Activated CD8-positive, alpha-beta T cell treated with anti-CD3 and anti-CD28 coated beads for 36 hours (primary cell): ENCODE measurements at regions of chr21 and their contacts with region 1.

Region 1: GRCh38 chr21:42233067-42233961 is 14.4 kb downstream of the ABCG1 start:
- DNase-seq: peak; percentile 95
- ATAC-seq: peak; percentile 70
- H3K4me3 Mint-ChIP-seq: peak overlapping the region; percentile 73
- H3K27ac Mint-ChIP-seq: peak overlapping the region; percentile 97
- H3K4me1 Mint-ChIP-seq: peaks cover 96% of the 10 kb centered on the region
- H3K27me3 Mint-ChIP-seq: no peaks in the 10 kb centered on the region
- CTCF ChIP-seq: peak; percentile 68

Region 2: GRCh38 chr21:41868062-41868710 is 365.1 kb before region 1 on chr21:
- CTCF ChIA-PET with region 1: no interaction called
- POLR2A ChIA-PET with region 1: no interaction called
- intact Hi-C with region 1: no loop called
- DNase-seq: no peak
- ATAC-seq: no peak
- H3K4me3 Mint-ChIP-seq: no peak overlapping the region
- H3K27ac Mint-ChIP-seq: no peak overlapping the region
- H3K4me1 Mint-ChIP-seq: peaks cover 31% of the 10 kb centered on the region
- H3K27me3 Mint-ChIP-seq: no peaks in the 10 kb centered on the region
- CTCF ChIP-seq: no peak

Region 3: DNA sequence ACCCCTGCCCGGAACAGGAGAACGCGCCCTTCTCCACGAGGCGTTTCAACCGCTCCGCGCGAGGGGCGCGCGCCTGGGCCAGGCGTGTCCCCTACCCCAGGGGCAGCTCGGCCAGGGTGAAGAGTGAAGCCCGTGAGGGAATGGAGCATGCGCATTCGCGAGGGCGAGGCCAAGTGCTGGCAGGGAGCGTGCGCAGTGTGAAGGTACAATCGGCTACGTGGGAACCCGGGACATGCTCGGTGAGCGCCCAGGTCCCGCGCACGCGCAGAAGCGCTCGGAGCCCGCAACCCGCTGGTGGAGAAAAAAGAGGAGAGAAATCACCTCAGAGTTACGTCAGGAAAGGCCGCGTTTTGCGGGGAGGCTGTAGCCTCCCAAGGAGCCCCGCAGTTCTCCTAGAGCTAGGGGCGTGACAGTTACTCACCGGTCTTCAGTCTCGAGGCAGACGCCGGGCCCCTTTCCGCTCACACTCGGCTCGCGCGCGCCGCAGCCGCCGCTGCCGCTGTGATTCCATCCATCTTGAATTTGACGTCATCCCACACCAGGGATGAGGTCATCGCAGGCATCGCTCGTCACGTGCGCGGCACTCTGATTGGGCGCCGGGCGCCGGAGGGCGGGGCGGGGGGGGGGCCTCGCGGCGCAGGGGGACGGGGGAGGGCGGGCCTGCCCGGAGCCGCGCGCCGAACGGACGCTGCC is 223.3 kb before region 1 on chr21 and contains the start of gene ZBTB21:
- CTCF ChIA-PET with region 1: no interaction called
- POLR2A ChIA-PET with region 1: interaction called, 5 read pairs
- intact Hi-C with region 1: loop called (anchors 10 kb)
- DNase-seq: peak; percentile 98
- ATAC-seq: peak; percentile 90
- H3K4me3 Mint-ChIP-seq: peak within 1 kb of the TSS; percentile 93
- H3K27ac Mint-ChIP-seq: peak within 1 kb of the TSS; percentile 99
- H3K4me1 Mint-ChIP-seq: peaks cover 28% of the 10 kb centered on the region
- H3K27me3 Mint-ChIP-seq: no peaks in the 10 kb centered on the region
- CTCF ChIP-seq: no peak
- total RNA-seq, gene ZBTB21: 29.6 to 29.7 TPM

Region 4: DNA sequence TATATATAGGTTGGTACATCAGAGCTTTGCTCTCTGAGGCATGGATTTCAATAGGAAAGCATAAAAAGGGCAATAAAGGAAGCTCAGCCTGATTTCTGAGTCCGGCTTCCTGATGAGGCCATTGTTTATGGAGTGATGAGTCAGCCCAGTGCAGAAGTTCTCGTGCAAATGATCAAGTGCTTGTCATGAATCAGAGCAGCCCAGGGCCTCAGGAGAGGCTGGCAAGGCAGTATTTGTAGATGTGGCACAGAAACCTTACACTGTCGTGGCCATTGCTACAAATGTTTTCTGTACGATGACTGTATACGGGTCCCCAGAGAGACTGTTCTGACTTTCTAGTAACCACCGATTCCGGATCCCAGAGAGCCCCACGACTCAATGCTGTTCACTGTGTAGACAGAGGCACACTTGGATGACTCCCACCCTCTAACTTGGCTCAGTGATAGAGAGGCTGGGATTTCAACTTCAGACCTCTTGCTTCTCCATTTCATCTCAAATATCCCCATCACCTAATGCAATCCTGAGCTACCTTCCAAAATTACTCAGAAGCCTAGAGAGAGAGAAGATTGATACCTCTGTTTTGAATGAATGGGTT is 135.4 kb before region 1 on chr21:
- CTCF ChIA-PET with region 1: no interaction called
- POLR2A ChIA-PET with region 1: no interaction called
- intact Hi-C with region 1: no loop called
- DNase-seq: no peak
- ATAC-seq: peak; percentile 34
- H3K4me3 Mint-ChIP-seq: no peak overlapping the region
- H3K27ac Mint-ChIP-seq: no peak overlapping the region
- H3K4me1 Mint-ChIP-seq: no peaks in the 10 kb centered on the region
- H3K27me3 Mint-ChIP-seq: no peaks in the 10 kb centered on the region
- CTCF ChIP-seq: no peak

Region 5: DNA sequence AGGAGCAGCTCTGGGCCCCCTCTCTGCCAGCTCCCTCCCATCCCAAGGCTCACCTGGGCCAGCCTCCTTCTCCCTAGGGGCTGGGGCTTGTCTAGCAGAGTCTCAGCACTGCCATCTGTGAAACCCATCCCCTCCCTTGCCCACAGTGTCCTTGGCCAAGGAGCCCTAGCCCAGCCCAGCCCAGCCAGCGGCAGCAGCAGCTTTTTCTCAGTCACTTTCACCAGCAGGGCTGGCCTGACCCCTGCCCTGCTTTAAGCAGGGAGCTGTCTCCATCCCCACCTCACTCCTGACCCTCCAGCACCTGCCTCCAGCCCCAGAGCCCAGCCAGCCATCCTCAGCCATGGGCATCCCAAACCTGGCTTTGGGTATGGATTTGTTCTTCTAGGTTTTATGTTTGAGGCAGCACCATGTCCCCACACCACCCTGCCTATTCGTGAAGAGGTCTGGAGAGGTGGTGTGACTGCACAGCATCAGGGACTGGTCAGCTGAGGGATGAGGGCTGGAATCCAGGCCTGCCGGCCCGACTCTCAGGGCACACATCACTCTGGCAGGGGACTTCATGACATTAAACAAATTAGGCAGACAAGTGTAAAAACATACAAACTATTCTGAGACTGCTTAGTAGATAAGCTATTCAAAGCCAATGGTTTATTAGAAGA is 50.5 kb before region 1 on chr21:
- CTCF ChIA-PET with region 1: interaction called, 15 read pairs
- POLR2A ChIA-PET with region 1: interaction called, 25 read pairs
- intact Hi-C with region 1: no loop called
- DNase-seq: no peak
- ATAC-seq: no peak
- H3K4me3 Mint-ChIP-seq: no peak overlapping the region
- H3K27ac Mint-ChIP-seq: no peak overlapping the region
- H3K4me1 Mint-ChIP-seq: peaks cover 26% of the 10 kb centered on the region
- H3K27me3 Mint-ChIP-seq: no peaks in the 10 kb centered on the region
- CTCF ChIP-seq: no peak

Region 6: DNA sequence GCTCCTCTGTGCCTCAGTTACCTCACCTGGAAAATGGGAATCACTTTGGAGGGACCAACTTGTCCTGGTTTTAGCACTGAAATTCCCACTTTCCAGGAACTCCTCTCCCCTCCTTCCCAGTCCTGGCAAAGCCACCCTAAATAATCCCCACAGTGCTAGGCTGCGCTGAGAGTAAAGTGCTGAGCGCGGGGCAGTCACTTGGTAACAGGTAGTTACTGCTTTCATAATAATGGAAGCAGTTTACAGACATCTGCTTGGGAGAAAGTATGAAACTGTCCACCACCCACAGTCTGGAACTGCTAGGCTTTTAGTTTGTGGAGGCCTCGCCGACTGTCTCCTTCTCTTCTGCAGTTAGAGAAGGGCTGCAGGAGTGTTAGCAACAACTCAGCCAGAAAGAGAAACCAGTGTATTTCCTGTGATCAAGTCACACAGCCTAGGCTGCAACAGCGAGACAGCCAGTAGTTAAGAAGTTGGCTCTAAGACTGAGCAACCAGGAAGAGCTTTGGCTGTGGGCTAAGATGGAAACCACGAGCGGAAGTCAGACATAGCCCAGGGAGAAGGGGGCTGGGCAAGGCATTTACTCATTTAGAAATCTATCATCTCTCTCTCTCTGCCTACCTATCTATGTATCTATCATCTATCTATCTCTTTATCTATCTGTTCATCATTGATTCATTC is 45.2 kb before region 1 on chr21:
- CTCF ChIA-PET with region 1: interaction called, 15 read pairs
- POLR2A ChIA-PET with region 1: interaction called, 25 read pairs
- intact Hi-C with region 1: loop called (anchors 5 kb)
- DNase-seq: peak; percentile 94
- ATAC-seq: peak; percentile 90
- H3K4me3 Mint-ChIP-seq: peak overlapping the region; percentile 62
- H3K27ac Mint-ChIP-seq: peak overlapping the region; percentile 95
- H3K4me1 Mint-ChIP-seq: peaks cover 67% of the 10 kb centered on the region
- H3K27me3 Mint-ChIP-seq: no peaks in the 10 kb centered on the region
- CTCF ChIP-seq: no peak

Region 7: GRCh38 chr21:42193131-42193671 is 40.1 kb before region 1 on chr21:
- CTCF ChIA-PET with region 1: interaction called, 15 read pairs
- POLR2A ChIA-PET with region 1: interaction called, 25 read pairs
- intact Hi-C with region 1: loop called (anchors 5 kb)
- DNase-seq: peak; percentile 88
- ATAC-seq: peak; percentile 50
- H3K4me3 Mint-ChIP-seq: no peak overlapping the region
- H3K27ac Mint-ChIP-seq: peak overlapping the region; percentile 75
- H3K4me1 Mint-ChIP-seq: peaks cover 57% of the 10 kb centered on the region
- H3K27me3 Mint-ChIP-seq: no peaks in the 10 kb centered on the region
- CTCF ChIP-seq: no peak

Region 8: DNA sequence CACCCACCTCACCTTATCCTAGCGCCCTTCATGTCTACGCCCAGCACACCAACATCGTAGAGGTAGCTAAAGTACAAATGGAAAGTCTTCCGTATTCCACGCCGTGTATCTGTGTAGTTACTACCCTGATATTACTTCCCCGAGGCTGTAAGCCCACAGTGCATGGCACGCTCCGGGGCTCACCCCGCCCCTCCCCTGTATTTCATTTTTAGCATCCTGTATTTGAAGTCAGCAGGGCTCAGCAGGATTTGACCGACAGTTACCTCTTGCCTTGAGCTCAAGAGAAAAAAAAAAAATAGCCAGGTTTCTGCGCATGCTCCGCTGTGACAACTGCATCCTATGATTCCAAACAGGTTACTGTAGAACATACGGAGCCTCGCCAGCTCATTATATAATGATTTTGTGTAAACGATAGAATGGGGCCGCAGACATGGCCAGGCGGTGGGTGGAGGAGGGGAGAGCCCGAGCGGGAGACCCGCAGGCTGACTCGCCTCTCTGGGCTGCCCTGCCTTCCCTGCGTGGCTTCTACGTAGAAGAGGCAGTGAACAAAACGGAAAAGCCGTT is 13.1 kb before region 1 on chr21:
- CTCF ChIA-PET with region 1: interaction called, 24 read pairs
- POLR2A ChIA-PET with region 1: interaction called, 110 read pairs
- intact Hi-C with region 1: no loop called
- DNase-seq: peak; percentile 84
- ATAC-seq: peak; percentile 84
- H3K4me3 Mint-ChIP-seq: peak overlapping the region; percentile 85
- H3K27ac Mint-ChIP-seq: peak overlapping the region; percentile 91
- H3K4me1 Mint-ChIP-seq: peaks cover 20% of the 10 kb centered on the region
- H3K27me3 Mint-ChIP-seq: no peaks in the 10 kb centered on the region
- CTCF ChIP-seq: no peak